HCT116 (cell line): ENCODE measurements at regions of chr12 and their contacts with region 1.

Region 1: GRCh38 chr12:75635606-75636410 is 124.4 kb upstream of the KRR1 start:
- DNase-seq: peak; percentile 99
- ATAC-seq: peak; percentile 87
- H3K4me3 ChIP-seq: no peak overlapping the region
- H3K27ac ChIP-seq: peak overlapping the region; percentile 99
- H3K4me1 ChIP-seq: peaks cover 64 to 73% of the 10 kb centered on the region in 2 experiments
- H3K27me3 ChIP-seq: no peaks in the 10 kb centered on the region
- CTCF ChIP-seq: no peak
- POLR2A ChIP-seq: no peak
- RAD21 ChIP-seq: 0 out of 2 replicates have a peak, but pooled peaks have one; percentile 48

Region 2: DNA sequence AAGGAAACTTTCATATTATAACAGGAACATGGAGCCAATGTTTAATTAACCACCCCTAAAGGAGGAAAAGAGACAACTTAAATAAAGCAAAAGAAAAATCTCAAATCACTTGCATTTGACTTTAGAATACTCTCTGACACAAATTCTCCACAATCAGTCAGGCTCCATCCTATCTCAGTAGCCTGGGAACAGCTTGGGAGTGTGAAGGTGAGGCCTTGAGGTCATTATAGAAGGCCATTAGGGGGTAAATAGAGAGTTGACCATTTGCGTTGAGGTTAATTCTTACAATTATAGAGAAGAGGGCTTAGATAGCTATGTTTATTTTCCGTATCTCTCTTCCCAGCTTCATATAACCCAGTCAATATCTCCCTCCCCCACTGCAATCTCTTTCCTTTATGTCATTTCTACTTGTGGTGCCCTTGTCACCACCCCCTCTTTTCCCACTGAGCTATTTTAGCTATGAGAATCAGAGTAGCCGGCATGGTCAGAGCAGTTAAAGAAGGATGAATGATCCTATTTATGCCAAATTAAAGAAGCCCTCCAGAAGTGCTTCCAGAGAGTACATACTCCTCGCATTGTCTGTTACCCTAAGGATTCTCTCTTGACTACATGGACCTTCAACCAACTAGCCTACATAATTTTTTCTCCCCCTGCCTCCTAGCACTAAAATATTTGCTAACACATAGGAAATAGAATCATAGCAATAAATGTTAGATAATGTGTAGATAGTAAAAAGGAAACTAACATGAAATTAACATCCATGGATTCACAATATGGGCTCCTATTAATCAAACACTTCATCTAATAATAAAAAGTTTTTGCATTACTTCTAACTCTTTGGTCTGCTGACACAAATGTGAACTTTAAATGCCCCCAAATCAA is 10.8 kb after region 1 on chr12:
- CTCF ChIA-PET with region 1: interaction called, 4 read pairs
- POLR2A ChIA-PET with region 1: interaction called, 271 read pairs
- RAD21 ChIA-PET with region 1: no interaction called
- intact Hi-C with region 1: no loop called
- DNase-seq: no peak
- ATAC-seq: peak; percentile 43
- H3K4me3 ChIP-seq: no peak overlapping the region
- H3K27ac ChIP-seq: peak overlapping the region; percentile 99
- H3K4me1 ChIP-seq: peaks cover 90 to 96% of the 10 kb centered on the region in 2 experiments
- H3K27me3 ChIP-seq: no peaks in the 10 kb centered on the region
- CTCF ChIP-seq: no peak
- POLR2A ChIP-seq: no peak
- RAD21 ChIP-seq: no peak

Region 3: DNA sequence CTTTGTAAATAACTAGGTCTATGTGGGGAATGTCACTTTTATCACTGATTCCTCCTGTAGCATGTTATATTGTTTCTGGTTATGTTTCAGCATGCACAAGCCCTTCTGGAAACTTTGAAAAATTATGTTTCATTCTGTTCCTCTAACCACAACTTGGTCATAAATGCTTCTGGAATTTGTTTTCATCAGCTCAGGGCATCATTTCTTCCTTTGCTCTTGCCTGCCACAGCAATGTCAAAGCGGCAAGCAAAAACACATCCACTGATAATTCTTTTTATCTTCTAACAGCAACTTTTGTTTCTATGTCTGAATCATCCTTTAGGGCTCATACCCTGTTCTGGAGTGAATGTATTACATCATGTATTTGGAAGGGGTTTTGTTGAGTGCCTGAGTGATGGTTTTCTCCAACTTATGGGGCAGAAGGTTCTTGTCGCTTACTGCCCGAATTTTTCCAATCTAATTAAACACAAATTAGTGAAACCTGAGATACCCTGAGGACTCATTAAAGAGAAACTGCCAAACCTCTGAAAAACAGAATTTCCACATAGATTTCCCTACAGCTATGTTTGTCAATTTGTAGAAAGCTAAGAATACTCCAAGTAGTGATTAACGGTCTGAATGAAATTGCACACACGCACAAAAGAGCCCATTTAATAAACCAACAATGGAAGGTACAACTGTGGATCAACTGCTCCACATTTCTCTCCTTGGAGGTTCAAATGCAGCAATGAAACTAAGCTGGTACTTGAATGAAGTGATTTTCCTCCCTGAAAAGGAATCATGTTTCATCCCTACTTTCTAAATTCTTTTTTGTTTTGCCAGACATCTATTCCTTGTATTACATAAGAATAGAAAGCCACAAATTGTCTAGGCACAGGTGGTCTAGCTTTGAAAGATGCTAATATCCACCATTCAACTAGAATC is 49.1 kb after region 1 on chr12:
- CTCF ChIA-PET with region 1: no interaction called
- POLR2A ChIA-PET with region 1: no interaction called
- RAD21 ChIA-PET with region 1: no interaction called
- intact Hi-C with region 1: no loop called
- DNase-seq: no peak
- ATAC-seq: no peak
- H3K4me3 ChIP-seq: no peak overlapping the region
- H3K27ac ChIP-seq: peak overlapping the region; percentile 65
- H3K4me1 ChIP-seq: peaks cover 30 to 40% of the 10 kb centered on the region in 2 experiments
- H3K27me3 ChIP-seq: no peaks in the 10 kb centered on the region
- CTCF ChIP-seq: no peak
- POLR2A ChIP-seq: no peak
- RAD21 ChIP-seq: no peak

Region 4: DNA sequence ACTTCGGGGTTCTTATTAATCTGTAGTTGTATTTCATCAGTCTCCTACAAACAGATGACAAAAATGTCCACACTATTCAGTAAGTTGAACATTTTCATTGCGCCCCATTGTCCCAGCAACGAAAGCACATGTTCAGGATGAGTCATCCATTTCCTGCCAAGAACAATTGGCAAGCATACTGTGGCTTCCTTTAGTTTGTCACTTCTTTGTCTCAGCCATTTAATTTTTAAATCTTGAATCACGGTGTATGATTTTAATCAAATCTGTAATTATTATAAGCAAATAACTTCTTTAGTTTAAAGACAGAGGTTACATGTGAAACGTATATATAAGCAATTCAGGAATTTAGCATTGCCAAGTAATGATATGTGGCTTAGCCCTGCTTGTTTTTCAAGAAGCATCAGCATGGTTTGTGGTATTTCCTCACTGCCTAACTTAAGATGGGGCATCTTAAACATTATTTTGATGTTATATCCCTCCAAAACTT is 86.9 kb after region 1 on chr12:
- CTCF ChIA-PET with region 1: no interaction called
- POLR2A ChIA-PET with region 1: interaction called, 5 read pairs
- RAD21 ChIA-PET with region 1: no interaction called
- intact Hi-C with region 1: loop called (anchors 5 kb)
- DNase-seq: peak; percentile 77
- ATAC-seq: no peak
- H3K4me3 ChIP-seq: no peak overlapping the region
- H3K27ac ChIP-seq: peak overlapping the region; percentile 100
- H3K4me1 ChIP-seq: peaks cover 87 to 96% of the 10 kb centered on the region in 2 experiments
- H3K27me3 ChIP-seq: no peaks in the 10 kb centered on the region
- CTCF ChIP-seq: no peak
- POLR2A ChIP-seq: no peak
- RAD21 ChIP-seq: no peak

Region 5: DNA sequence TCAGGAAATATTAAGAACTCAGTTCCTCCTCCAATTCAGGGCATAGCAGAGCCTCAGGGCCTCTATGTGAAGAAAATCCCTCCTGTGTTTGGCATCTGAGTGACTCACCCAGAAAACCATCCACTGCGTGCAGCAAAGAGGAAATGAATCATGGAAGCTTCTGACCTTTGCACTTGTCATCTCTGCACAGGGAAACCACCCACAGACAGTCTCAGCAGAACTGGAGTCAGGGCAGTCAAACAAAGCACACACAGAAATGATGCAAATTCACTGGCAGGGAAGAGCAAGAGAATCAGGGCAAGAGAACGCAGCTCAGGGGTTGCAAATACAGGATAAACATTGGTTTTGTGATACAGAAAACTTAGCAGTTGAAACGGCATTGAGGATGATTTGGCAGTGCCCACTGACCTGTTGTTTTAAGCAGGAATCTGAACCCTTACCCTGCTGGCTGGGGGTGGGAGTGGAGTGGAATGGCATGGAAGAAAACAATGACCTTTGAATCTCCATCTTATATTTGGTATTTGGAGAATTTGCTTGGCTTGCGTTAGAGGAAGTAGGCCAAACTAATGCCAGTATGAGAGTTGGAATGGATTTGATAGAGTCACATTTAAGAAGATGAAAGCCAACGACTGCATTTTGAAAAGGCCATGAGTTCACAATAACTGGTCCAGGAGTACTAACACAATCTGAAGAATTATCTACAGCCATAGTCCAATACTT is 342.3 kb after region 1 on chr12:
- CTCF ChIA-PET with region 1: no interaction called
- POLR2A ChIA-PET with region 1: no interaction called
- RAD21 ChIA-PET with region 1: no interaction called
- intact Hi-C with region 1: loop called (anchors 5 kb)
- DNase-seq: peak; percentile 94
- ATAC-seq: peak; percentile 80
- H3K4me3 ChIP-seq: no peak overlapping the region
- H3K27ac ChIP-seq: peak overlapping the region; percentile 98
- H3K4me1 ChIP-seq: peaks cover 70 to 89% of the 10 kb centered on the region in 2 experiments
- H3K27me3 ChIP-seq: no peaks in the 10 kb centered on the region
- CTCF ChIP-seq: 0 out of 6 replicates have a peak, but pooled peaks of 1 of the 3 experiments have one; percentile 3
- POLR2A ChIP-seq: no peak
- RAD21 ChIP-seq: peak; percentile 38

Region 6: GRCh38 chr12:76031537-76032073 is 395.8 kb after region 1 on chr12 and contains the start of gene PHLDA1:
- CTCF ChIA-PET with region 1: no interaction called
- POLR2A ChIA-PET with region 1: interaction called, 3 read pairs
- RAD21 ChIA-PET with region 1: no interaction called
- intact Hi-C with region 1: loop called (anchors 5 kb)
- DNase-seq: peak; percentile 77
- ATAC-seq: peak; percentile 70
- H3K4me3 ChIP-seq: peak within 1 kb of the TSS; percentile 75
- H3K27ac ChIP-seq: peak within 1 kb of the TSS; percentile 88
- H3K4me1 ChIP-seq: peaks cover 23 to 59% of the 10 kb centered on the region in 2 experiments
- H3K27me3 ChIP-seq: no peaks in the 10 kb centered on the region
- CTCF ChIP-seq: peak in 1 of 3 experiments; percentile 22; a peak in 1 of 6 replicates
- POLR2A ChIP-seq: peak; percentile 67
- RAD21 ChIP-seq: no peak; the same call in 1 of the 2 replicates
- total RNA-seq, gene PHLDA1: 231 TPM

Region 7: DNA sequence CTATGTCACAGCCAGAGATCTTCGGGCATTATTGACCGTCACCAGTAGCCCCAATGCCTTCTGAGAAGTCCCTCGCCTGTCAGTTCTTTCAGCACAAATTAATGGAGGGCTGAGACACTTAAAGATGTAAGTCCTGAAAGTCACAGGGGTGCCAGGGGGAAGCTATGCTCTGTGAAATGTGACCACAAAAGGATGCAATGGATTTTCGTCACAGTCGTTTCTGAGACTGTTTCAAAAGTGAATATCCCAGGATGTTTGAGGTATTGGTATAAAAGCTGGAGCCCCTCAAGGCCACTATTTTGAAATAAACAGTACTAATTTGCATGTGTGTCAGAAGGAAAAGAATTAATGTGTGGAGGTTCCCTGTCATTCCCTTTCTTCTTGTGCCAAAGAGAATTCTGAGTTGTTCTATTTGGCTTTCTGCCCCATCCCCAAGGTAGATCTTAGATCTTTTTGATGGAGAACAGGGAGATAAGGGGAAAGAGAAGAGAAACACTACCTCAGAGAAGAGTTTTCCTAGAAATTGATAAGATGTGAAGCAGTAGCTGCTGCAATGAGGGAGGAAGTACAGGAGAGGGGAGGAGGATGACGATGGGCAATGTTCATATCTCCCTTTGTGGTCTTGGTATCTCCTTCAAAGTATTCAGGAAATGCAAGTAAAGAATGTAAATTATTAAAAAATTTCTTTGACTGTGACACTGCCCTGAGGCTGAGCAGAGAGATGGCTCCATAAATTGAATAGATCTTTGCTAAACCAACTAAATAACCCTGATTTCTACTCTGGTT is 550.5 kb after region 1 on chr12:
- CTCF ChIA-PET with region 1: no interaction called
- POLR2A ChIA-PET with region 1: no interaction called
- RAD21 ChIA-PET with region 1: no interaction called
- intact Hi-C with region 1: no loop called
- DNase-seq: no peak
- ATAC-seq: no peak
- H3K4me3 ChIP-seq: no peak overlapping the region
- H3K27ac ChIP-seq: no peak overlapping the region
- H3K4me1 ChIP-seq: peaks cover 0 to 14% of the 10 kb centered on the region in 2 experiments; a peak in 3 of 4 replicates
- H3K27me3 ChIP-seq: no peaks in the 10 kb centered on the region
- CTCF ChIP-seq: no peak
- POLR2A ChIP-seq: no peak
- RAD21 ChIP-seq: no peak

Region 8: DNA sequence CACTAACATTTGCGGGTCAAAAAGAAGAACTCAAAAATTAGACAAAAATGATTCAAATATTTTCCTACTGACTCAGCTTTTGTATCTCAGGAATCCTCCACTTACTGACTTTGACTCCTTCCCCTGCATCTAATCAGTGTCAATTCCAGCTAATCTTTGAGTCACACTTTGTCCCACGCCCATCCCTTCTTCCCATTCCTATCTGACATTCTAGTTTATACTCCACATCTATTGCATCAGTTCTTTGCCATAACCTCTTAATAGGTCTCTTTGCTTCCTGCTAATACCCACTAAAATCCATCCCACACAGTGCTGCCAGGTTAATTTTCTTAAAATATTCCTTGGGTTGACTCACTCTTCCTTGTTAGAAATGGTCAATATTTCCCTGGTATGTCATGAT is 693.4 kb after region 1 on chr12:
- CTCF ChIA-PET with region 1: no interaction called
- POLR2A ChIA-PET with region 1: no interaction called
- RAD21 ChIA-PET with region 1: no interaction called
- intact Hi-C with region 1: loop called (anchors 5 kb)
- DNase-seq: peak; percentile 86
- ATAC-seq: peak; percentile 79
- H3K4me3 ChIP-seq: no peak overlapping the region
- H3K27ac ChIP-seq: peak overlapping the region; percentile 87
- H3K4me1 ChIP-seq: peaks cover 17 to 43% of the 10 kb centered on the region in 2 experiments
- H3K27me3 ChIP-seq: no peaks in the 10 kb centered on the region
- CTCF ChIP-seq: no peak
- POLR2A ChIP-seq: no peak
- RAD21 ChIP-seq: peak; percentile 36

Region 9: GRCh38 chr12:76450690-76451089 is 814.9 kb after region 1 on chr12:
- CTCF ChIA-PET with region 1: no interaction called
- POLR2A ChIA-PET with region 1: interaction called, 4 read pairs
- RAD21 ChIA-PET with region 1: no interaction called
- intact Hi-C with region 1: loop called (anchors 5 kb)
- DNase-seq: peak; percentile 74
- ATAC-seq: peak; percentile 39; the same call in 1 of the 2 replicates
- H3K4me3 ChIP-seq: no peak overlapping the region
- H3K27ac ChIP-seq: peak overlapping the region; percentile 63; the same call in 1 of the 2 replicates
- H3K4me1 ChIP-seq: peaks cover 42 to 61% of the 10 kb centered on the region in 2 experiments
- H3K27me3 ChIP-seq: no peaks in the 10 kb centered on the region
- CTCF ChIP-seq: no peak
- POLR2A ChIP-seq: no peak
- RAD21 ChIP-seq: no peak